H1 (cell line): ENCODE measurements at regions of chr1 and their contacts with region 1.

Region 1: DNA sequence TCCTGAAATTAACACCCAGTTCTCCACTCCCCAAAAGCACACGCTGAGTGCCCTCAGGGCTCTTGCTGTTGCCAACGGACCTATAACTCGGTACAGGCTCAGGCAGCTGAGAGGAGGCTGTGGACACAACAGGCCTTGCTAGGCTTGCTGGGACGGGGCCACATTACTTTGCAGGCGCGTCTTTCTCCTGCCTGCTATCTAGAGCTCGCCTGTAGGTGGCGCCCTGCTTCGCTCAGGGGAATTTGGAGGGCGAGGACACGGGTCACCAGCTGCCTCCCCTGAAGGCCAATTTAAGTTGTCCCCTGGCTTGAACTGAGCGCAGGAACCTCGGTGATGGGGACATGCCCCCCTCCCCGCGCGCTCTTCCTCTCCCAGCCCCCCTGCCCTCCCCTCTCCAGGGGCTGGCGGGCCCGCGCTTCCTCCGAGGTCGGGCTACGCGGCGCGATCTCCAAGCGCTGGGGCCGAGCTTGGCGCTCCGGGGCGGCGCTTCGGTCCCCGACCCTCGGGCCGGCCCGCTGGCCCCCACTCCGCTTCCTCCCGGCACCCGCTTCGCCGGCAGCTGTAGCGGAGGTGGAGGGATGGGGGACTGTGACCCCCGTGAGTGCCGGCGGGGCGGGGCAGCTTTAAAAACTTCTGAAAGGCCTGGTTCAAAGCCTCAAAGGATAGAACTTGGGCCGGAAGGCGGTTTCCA is 32.4 kb upstream of the NFIA start:
- DNase-seq: peak; percentile 82 to 99
- H3K4me3 ChIP-seq: peak overlapping the region; percentile 34 to 85 (median 58)
- H3K27ac ChIP-seq: no peak overlapping the region
- H3K4me1 ChIP-seq: peaks cover 0 to 22% (median 10%) of the 10 kb centered on the region in 4 experiments; a peak in 4 of 7 replicates
- H3K27me3 ChIP-seq: peaks cover 33 to 41% (median 41%) of the 10 kb centered on the region in 4 experiments
- CTCF ChIP-seq: peak; percentile 86 to 97 (median 92)
- EP300 ChIP-seq: peak in 1 of 2 experiments; percentile 64; a peak in 1 of 3 replicates
- POLR2A ChIP-seq: no peak
- RAD21 ChIP-seq: peak; percentile 85 to 86

Region 2: GRCh38 chr1:60281360-60281932 is 768.5 kb before region 1 on chr1:
- CTCF ChIA-PET with region 1: interaction called, 10 read pairs
- POLR2A ChIA-PET with region 1: no interaction called
- DNase-seq: peak; percentile 59 to 61
- H3K4me3 ChIP-seq: no peak overlapping the region
- H3K27ac ChIP-seq: no peak overlapping the region
- H3K4me1 ChIP-seq: peaks cover 0 to 5% (median 0%) of the 10 kb centered on the region in 4 experiments; a peak in 2 of 7 replicates
- H3K27me3 ChIP-seq: no peaks in the 10 kb centered on the region
- CTCF ChIP-seq: peak; percentile 78 to 95 (median 82)
- EP300 ChIP-seq: no peak
- POLR2A ChIP-seq: no peak
- RAD21 ChIP-seq: peak; percentile 97 to 98

Region 3: GRCh38 chr1:60930130-60930529 is 119.9 kb before region 1 on chr1:
- CTCF ChIA-PET with region 1: no interaction called
- POLR2A ChIA-PET with region 1: no interaction called
- DNase-seq: no peak
- H3K4me3 ChIP-seq: no peak overlapping the region
- H3K27ac ChIP-seq: no peak overlapping the region
- H3K4me1 ChIP-seq: peaks cover 0 to 4% (median 0%) of the 10 kb centered on the region in 4 experiments; a peak in 3 of 7 replicates
- H3K27me3 ChIP-seq: no peaks in the 10 kb centered on the region
- CTCF ChIP-seq: no peak
- EP300 ChIP-seq: no peak
- POLR2A ChIP-seq: no peak
- RAD21 ChIP-seq: no peak

Region 4: DNA sequence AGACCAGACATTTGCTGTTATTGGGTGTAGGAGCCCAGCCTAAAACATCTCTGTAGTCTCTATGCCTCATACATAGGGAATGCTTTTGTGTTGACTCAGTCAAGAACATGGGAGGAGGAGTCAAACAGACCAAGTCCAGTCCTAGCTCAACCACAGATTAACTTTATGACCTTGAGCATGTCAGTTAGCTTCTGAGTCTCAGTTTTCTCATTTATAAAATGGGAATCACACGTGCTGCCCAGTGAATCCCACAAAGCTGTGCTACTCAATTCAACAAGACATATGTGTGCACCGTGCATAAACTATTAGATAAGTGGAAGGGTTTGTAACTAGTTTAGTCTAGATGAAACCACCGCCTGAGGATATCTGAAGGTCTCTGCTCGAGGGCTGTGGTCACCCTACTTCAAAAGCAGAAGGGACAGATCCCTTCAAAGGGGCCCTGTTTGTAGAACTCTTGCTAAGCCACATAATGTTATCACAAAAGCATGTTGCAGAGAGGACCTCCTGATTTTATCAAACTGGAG is 77.1 kb before region 1 on chr1:
- CTCF ChIA-PET with region 1: interaction called, 29 read pairs
- POLR2A ChIA-PET with region 1: interaction called, 3 read pairs
- DNase-seq: no peak
- H3K4me3 ChIP-seq: no peak overlapping the region
- H3K27ac ChIP-seq: no peak overlapping the region
- H3K4me1 ChIP-seq: peaks cover 0 to 12% (median 8%) of the 10 kb centered on the region in 4 experiments; a peak in 3 of 7 replicates
- H3K27me3 ChIP-seq: peaks cover 0 to 5% (median 0%) of the 10 kb centered on the region in 4 experiments; a peak in 2 of 7 replicates
- CTCF ChIP-seq: no peak
- EP300 ChIP-seq: no peak
- POLR2A ChIP-seq: no peak
- RAD21 ChIP-seq: no peak

Region 5: GRCh38 chr1:61077676-61078541 is 27.9 kb after region 1 on chr1:
- CTCF ChIA-PET with region 1: interaction called, 65 read pairs
- POLR2A ChIA-PET with region 1: interaction called, 8 read pairs
- DNase-seq: peak in 1 of 2 experiments; percentile 74
- H3K4me3 ChIP-seq: peak overlapping the region; percentile 38 to 77 (median 74)
- H3K27ac ChIP-seq: no peak overlapping the region
- H3K4me1 ChIP-seq: peaks cover 5 to 23% (median 11%) of the 10 kb centered on the region in 4 experiments; a peak in 5 of 7 replicates
- H3K27me3 ChIP-seq: peaks cover 15 to 45% (median 34%) of the 10 kb centered on the region in 4 experiments
- CTCF ChIP-seq: no peak
- EP300 ChIP-seq: no peak
- POLR2A ChIP-seq: no peak
- RAD21 ChIP-seq: no peak

Region 6: DNA sequence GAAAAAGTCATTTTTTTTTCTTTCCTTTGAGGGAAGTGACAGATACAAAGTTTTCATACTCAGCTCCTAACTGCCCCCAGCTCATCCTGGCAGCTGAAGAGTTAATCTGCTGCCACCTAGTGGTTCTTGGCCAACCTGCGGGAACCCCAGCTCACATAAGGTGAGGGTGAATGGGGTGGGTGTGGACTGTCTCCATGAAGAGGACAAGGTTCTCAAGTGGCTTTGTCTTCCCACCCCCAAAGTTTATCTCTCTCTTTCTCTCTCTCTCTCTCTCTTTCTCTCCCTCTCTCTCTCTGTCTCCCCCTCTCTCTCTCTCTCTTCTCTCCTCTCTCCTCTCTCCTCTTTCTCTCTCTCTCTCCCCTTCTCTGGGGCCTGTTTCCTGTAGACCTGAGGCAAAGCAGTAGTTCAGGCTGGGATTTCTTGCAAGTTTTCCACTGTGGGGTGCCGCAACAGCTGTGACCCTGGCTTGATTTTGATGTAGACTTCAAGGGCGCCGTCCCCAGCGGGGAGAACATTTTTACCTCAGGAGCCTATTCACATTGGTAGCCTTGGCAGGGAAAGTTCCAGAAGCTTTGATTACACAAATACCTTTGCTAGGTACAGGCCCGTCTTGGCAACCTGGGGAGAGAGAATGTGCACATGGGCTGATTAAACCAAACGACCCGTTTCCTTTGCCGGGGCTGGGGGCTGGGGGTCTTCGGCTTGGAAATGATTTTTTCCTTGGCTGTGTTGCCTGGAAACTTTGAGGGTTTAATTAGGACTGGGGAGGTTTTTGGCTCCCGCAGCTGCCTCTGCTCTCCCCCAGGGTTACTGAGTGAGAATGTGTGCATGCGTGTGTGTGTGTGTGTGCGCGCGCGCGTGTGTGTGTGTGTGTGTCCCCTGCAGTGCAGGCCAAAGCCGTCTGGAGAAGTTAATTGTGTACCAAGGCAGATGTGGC is 539.0 kb after region 1 on chr1:
- CTCF ChIA-PET with region 1: interaction called, 11 read pairs
- POLR2A ChIA-PET with region 1: no interaction called
- DNase-seq: peak; percentile 43 to 85
- H3K4me3 ChIP-seq: peak overlapping the region in 1 of 4 experiments; percentile 13; a peak in 2 of 8 replicates
- H3K27ac ChIP-seq: no peak overlapping the region
- H3K4me1 ChIP-seq: peaks cover 3 to 9% (median 6%) of the 10 kb centered on the region in 4 experiments; a peak in 6 of 7 replicates
- H3K27me3 ChIP-seq: no peaks in the 10 kb centered on the region
- CTCF ChIP-seq: peak; percentile 81 to 95 (median 86)
- EP300 ChIP-seq: no peak
- POLR2A ChIP-seq: no peak
- RAD21 ChIP-seq: peak; percentile 85 to 89